T-cell (primary cell): ENCODE measurements at regions of chr6 and their contacts with region 1.

Region 1: DNA sequence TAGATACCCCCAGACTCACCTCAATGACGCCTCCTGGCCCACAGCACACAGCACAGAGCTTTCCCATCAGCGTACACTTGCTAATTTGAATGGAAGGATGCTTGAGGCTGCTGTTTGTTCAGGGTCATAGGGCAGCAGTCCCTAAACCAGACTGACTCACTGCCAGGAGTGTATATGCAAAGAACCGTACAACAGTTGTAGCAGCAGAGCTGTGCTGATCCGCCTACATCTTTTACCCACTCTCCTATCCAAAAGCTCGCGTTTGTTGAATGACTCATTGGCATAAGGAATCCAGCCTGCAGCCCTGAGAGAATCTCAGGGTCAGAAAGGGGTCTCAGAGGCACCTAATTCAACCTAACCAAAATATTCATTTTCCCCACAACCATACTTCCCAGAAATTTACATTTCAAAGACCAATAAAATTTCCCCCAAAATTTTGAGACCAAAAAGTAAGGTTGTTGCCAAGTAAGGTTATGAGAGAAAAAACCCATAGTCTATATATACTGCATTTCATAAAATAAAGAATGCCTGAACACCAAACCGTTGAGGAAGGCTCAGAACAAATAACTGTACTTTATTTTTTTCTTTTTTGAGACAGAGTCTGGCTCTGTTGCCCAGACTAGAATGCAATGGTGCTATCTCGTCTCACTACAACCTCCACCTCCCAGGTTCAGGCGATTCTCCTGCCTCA is 35.3 kb upstream of the CCND3 start:
- DNase-seq: no peak
- ATAC-seq: peak in 1 of 4 experiments; percentile 19
- H3K4me3 ChIP-seq: no peak overlapping the region
- H3K4me3 Mint-ChIP-seq: peak overlapping the region in 1 of 3 donors; percentile 33
- H3K27ac ChIP-seq: no peak overlapping the region
- H3K27ac Mint-ChIP-seq: peak overlapping the region; percentile 81 to 87
- H3K4me1 ChIP-seq: peaks cover 25 to 70% of the 10 kb centered on the region in 2 experiments
- H3K4me1 Mint-ChIP-seq: peaks cover 72 to 81% (median 81%) of the 10 kb centered on the region in 3 donors
- H3K27me3 ChIP-seq: no peaks in the 10 kb centered on the region
- H3K27me3 Mint-ChIP-seq: no peaks in the 10 kb centered on the region

Region 2: DNA sequence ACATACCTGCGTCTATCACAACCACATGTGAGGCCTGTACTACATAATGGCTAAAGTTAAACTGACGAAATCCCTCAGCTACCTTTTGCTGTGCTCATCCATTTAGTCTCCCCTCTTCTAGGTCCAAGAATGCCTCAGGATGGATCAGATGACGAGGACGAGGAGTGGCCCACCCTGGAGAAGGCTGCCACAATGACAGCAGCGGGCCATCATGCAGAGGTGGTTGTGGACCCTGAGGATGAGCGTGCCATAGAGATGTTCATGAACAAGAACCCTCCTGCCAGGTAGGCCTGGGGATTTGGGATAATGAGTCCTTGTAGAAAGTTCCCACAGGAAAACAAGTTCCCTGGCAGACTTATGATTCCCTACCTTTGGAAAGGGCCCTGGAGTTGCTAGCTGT is 49.7 kb before region 1 on chr6:
- CTCF ChIA-PET with region 1: no interaction called
- POLR2A ChIA-PET with region 1: interaction called in 1 of 2 experiments, 12 read pairs
- DNase-seq: no peak
- ATAC-seq: no peak
- H3K4me3 ChIP-seq: no peak overlapping the region
- H3K4me3 Mint-ChIP-seq: no peak overlapping the region
- H3K27ac ChIP-seq: no peak overlapping the region
- H3K27ac Mint-ChIP-seq: peak overlapping the region in 1 of 2 donors; percentile 50
- H3K4me1 ChIP-seq: peaks cover 8 to 39% of the 10 kb centered on the region in 2 experiments
- H3K4me1 Mint-ChIP-seq: peaks cover 35 to 48% (median 46%) of the 10 kb centered on the region in 3 donors
- H3K27me3 ChIP-seq: no peaks in the 10 kb centered on the region
- H3K27me3 Mint-ChIP-seq: no peaks in the 10 kb centered on the region